ENCODE measurements at regions of chr18 and their contacts with region 1.

Region 1: GRCh38 chr18:59996370-59996966 is 96.7 kb downstream of the PMAIP1 start:
- DNase-seq: no peak
- H3K4me3 ChIP-seq: no peak overlapping the region
- H3K27ac ChIP-seq: no peak overlapping the region
- H3K4me1 ChIP-seq: no peaks in the 10 kb centered on the region
- H3K27me3 ChIP-seq: peaks cover 79% of the 10 kb centered on the region
- CTCF ChIP-seq: peak; percentile 38

Region 2: GRCh38 chr18:58202406-58202730 is 1794.1 kb before region 1 on chr18:
- intact Hi-C with region 1: no loop called
- DNase-seq: no peak
- H3K4me3 ChIP-seq: no peak overlapping the region
- H3K27ac ChIP-seq: peak overlapping the region; percentile 50
- H3K4me1 ChIP-seq: peaks cover 28% of the 10 kb centered on the region
- H3K27me3 ChIP-seq: no peaks in the 10 kb centered on the region
- CTCF ChIP-seq: no peak

Region 3: GRCh38 chr18:59582395-59582794 is 414.1 kb before region 1 on chr18:
- intact Hi-C with region 1: no loop called
- DNase-seq: no peak
- H3K4me3 ChIP-seq: no peak overlapping the region
- H3K27ac ChIP-seq: no peak overlapping the region
- H3K4me1 ChIP-seq: peaks cover 9% of the 10 kb centered on the region
- H3K27me3 ChIP-seq: no peaks in the 10 kb centered on the region
- CTCF ChIP-seq: no peak

Region 4: GRCh38 chr18:59874166-59874565 is 122.3 kb before region 1 on chr18:
- intact Hi-C with region 1: no loop called
- DNase-seq: no peak
- H3K4me3 ChIP-seq: no peak overlapping the region
- H3K27ac ChIP-seq: no peak overlapping the region
- H3K4me1 ChIP-seq: no peaks in the 10 kb centered on the region
- H3K27me3 ChIP-seq: peaks cover 29% of the 10 kb centered on the region
- CTCF ChIP-seq: no peak

Region 5: DNA sequence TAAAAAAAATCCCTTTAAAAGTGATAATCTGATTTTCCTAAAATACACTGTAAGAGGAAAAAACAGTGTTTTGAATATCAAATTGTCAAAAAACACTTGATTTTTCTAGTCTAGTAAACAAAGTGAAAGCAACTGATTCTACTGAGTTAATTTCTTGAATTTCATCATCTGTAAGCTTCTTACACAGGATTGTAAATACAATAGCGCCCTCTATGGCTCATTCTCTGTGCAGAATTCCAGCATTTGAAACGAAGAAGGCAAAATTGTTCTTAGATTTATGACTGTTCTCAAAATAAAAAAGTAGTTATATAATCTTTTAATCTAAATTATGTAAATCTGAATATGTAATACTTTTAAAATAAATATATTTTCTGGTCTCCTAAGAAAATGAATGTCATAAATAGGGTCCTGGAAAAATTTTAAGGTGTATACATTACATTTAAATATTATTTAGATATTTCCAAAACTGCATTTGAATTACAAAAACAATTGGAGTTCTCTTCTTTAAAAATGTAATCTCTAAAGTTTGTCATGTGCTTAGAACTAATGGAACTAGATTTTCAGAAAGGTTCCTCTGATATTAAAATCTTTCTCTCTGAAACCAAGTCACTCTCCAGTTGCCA is 553.0 kb after region 1 on chr18:
- intact Hi-C with region 1: loop called (anchors 10 kb)
- DNase-seq: no peak
- H3K4me3 ChIP-seq: no peak overlapping the region
- H3K27ac ChIP-seq: no peak overlapping the region
- H3K4me1 ChIP-seq: no peaks in the 10 kb centered on the region
- H3K27me3 ChIP-seq: peaks cover 19% of the 10 kb centered on the region
- CTCF ChIP-seq: peak; percentile 78

Measured in left ventricle myocardium inferior (tissue), 1 donor.